Esophagus muscularis mucosa (tissue), 4 donors: ENCODE measurements at regions of chr4 and their contacts with region 1.

Region 1: DNA sequence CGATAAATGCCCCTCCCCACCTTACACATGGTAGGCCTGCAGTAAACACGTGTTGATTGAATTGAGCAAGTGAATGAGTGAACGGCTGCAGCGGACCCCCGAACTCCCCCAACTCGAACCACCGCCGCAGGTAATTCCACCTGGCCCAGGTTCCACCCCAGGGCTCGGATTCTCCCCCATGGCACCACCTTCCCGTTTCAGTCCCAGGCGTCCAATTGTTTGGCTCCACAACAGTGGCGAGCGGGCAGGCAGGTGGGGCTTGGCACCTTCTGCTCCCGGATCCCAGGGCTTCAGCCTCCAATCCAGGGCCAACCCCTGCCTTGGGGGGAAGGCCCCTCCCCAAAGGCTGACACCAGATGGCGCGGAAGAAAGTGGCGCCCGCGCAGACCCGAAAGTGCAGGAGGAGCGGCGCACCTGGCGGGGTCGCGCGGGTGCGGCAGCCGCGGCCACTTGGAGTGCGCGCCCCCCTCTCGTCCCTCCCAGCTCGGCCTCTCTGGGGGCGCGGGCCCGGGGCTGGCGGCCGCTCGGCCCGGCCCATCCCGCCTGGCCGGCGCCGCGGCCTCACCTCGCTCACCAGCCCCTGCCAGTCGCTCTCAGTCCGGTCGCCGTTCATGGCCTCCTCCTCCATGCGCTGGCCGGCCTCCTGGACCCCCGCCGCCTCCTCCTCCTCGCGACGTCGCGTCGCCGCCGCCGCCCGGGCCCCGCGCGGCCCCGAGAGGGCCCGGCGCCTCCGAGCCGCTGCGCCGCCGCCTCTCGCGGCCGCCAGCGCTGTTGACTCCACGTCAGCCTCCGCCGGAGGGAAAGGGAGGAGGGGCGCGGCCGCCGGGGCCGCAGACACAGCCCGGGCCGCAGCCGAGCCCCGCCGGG is at the start of gene CCDC149:
- DNase-seq: no peak
- H3K4me3 ChIP-seq: peak within 1 kb of the TSS; percentile 68 to 90 (median 74)
- H3K27ac ChIP-seq: peak within 1 kb of the TSS; percentile 90 to 92 (median 92)
- H3K4me1 ChIP-seq: peaks cover 6 to 37% (median 25%) of the 10 kb centered on the region in 4 donors
- H3K27me3 ChIP-seq: no peaks in the 10 kb centered on the region
- CTCF ChIP-seq: peak in 2 of 3 experiments; percentile 5 to 10
- EP300 ChIP-seq: no peak
- POLR2A ChIP-seq: no peak
- total RNA-seq, gene CCDC149: 21.0 to 37.9 (median 34.0) TPM

Region 2: GRCh38 chr4:23455456-23456158 is 1456.9 kb before region 1 on chr4:
- intact Hi-C with region 1: no loop called
- DNase-seq: no peak
- H3K4me3 ChIP-seq: no peak overlapping the region
- H3K27ac ChIP-seq: peak overlapping the region in 1 of 4 donors; percentile 29
- H3K4me1 ChIP-seq: peaks cover 13 to 42% (median 35%) of the 10 kb centered on the region in 4 donors
- H3K27me3 ChIP-seq: no peaks in the 10 kb centered on the region
- CTCF ChIP-seq: peak in 2 of 3 experiments; percentile 21 to 31
- EP300 ChIP-seq: no peak
- POLR2A ChIP-seq: no peak

Region 3: GRCh38 chr4:24488399-24489164 is 423.9 kb before region 1 on chr4:
- intact Hi-C with region 1: loop called (anchors 5 kb)
- DNase-seq: no peak
- H3K4me3 ChIP-seq: no peak overlapping the region
- H3K27ac ChIP-seq: no peak overlapping the region
- H3K4me1 ChIP-seq: peaks cover 0 to 10% (median 3%) of the 10 kb centered on the region in 4 donors
- H3K27me3 ChIP-seq: no peaks in the 10 kb centered on the region
- CTCF ChIP-seq: peak; percentile 66 to 89 (median 84)
- EP300 ChIP-seq: no peak
- POLR2A ChIP-seq: no peak

Region 4: GRCh38 chr4:24584175-24584850 is 328.2 kb before region 1 on chr4 and contains the start of gene DHX15:
- intact Hi-C with region 1: loop called (anchors 10 kb)
- DNase-seq: peak; percentile 99
- H3K4me3 ChIP-seq: peak within 1 kb of the TSS; percentile 78 to 99 (median 97)
- H3K27ac ChIP-seq: peak within 1 kb of the TSS; percentile 96 to 100 (median 98)
- H3K4me1 ChIP-seq: peaks cover 25 to 43% (median 41%) of the 10 kb centered on the region in 4 donors
- H3K27me3 ChIP-seq: no peaks in the 10 kb centered on the region
- CTCF ChIP-seq: no peak
- EP300 ChIP-seq: no peak
- POLR2A ChIP-seq: peak; percentile 61
- total RNA-seq, gene DHX15: 86.8 to 113 (median 94.4) TPM

Region 5: DNA sequence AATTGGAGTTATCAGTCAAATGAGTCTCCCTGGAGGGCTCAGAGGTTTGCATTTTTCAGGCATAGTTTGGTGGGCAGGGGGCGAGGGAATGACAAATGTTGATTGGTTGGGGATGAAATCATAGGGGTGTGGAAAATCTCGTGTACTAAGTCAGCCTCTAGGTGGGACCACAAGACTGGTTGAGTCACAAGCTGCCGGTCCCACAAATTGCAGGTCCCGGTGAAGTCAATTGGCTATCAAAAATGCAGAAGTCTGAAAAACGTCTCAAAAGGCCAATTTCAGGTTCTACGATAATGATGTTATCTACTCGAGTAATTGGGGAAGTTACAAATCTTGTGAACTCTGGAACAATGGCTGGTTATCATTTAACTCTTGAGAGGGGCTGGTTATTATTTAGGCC is 229.4 kb before region 1 on chr4:
- intact Hi-C with region 1: loop called (anchors 5 kb)
- DNase-seq: no peak
- H3K4me3 ChIP-seq: no peak overlapping the region
- H3K27ac ChIP-seq: no peak overlapping the region
- H3K4me1 ChIP-seq: no peaks in the 10 kb centered on the region
- H3K27me3 ChIP-seq: no peaks in the 10 kb centered on the region
- CTCF ChIP-seq: peak; percentile 9 to 27 (median 20)
- EP300 ChIP-seq: no peak
- POLR2A ChIP-seq: no peak

Region 6: GRCh38 chr4:24824720-24825119 is 87.8 kb before region 1 on chr4:
- intact Hi-C with region 1: no loop called
- DNase-seq: no peak
- H3K4me3 ChIP-seq: no peak overlapping the region
- H3K27ac ChIP-seq: peak overlapping the region; percentile 25 to 64 (median 41)
- H3K4me1 ChIP-seq: peaks cover 0 to 12% (median 11%) of the 10 kb centered on the region in 4 donors
- H3K27me3 ChIP-seq: no peaks in the 10 kb centered on the region
- CTCF ChIP-seq: no peak
- EP300 ChIP-seq: no peak
- POLR2A ChIP-seq: no peak

Region 7: GRCh38 chr4:25406081-25406692 is 493.7 kb after region 1 on chr4:
- intact Hi-C with region 1: no loop called
- DNase-seq: no peak
- H3K4me3 ChIP-seq: no peak overlapping the region
- H3K27ac ChIP-seq: no peak overlapping the region
- H3K4me1 ChIP-seq: no peaks in the 10 kb centered on the region
- H3K27me3 ChIP-seq: no peaks in the 10 kb centered on the region
- CTCF ChIP-seq: no peak
- EP300 ChIP-seq: no peak
- POLR2A ChIP-seq: no peak